PC-9 (cell line): ENCODE measurements at regions of chr5 and their contacts with region 1.

Region 1: DNA sequence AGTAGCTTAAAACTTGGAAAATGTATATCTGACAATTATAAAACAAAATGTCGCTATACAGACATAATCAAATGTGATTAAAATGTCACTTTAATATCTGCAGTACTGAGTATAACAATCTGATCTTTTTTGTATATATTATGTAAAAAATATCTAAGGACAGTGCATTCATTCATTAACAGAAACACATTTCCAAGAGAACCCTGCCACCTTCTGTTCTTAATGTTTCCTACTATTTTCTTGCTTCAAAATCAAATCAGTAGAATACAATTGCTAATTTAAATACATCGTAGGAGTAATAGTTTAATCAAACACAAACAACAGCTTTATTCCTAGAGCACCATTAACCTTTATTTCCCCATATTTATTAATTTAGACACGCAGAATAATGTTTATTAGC is 142.6 kb upstream of the ST8SIA4 start:
- DNase-seq: no peak
- H3K4me3 ChIP-seq: no peak overlapping the region
- H3K27ac ChIP-seq: no peak overlapping the region
- H3K4me1 ChIP-seq: no peaks in the 10 kb centered on the region
- H3K27me3 ChIP-seq: no peaks in the 10 kb centered on the region
- CTCF ChIP-seq: peak; percentile 49

Region 2: GRCh38 chr5:100479079-100479688 is 566.5 kb before region 1 on chr5:
- CTCF ChIA-PET with region 1: no interaction called
- POLR2A ChIA-PET with region 1: no interaction called
- intact Hi-C with region 1: loop called (anchors 5 kb)
- DNase-seq: no peak
- H3K4me3 ChIP-seq: no peak overlapping the region
- H3K27ac ChIP-seq: no peak overlapping the region
- H3K4me1 ChIP-seq: no peaks in the 10 kb centered on the region
- H3K27me3 ChIP-seq: no peaks in the 10 kb centered on the region
- CTCF ChIP-seq: peak; percentile 64

Region 3: DNA sequence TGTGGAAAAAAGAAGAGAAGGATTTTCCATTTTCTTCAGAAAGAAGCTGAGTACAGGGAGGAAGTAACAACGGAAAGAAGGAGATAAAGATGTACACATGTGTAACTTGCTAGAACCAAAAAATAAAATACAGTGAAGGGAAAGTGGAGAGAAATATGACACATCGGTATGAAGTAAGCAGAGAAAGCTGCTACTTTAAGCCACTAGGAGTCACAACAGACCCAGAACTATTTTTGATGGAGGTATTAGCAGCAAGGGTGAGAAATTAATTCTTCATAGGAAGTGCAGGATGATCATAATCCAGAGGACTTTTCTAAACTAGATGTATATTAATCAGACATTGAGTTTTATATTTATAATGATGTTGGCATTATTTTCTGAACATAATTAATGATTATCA is 422.0 kb before region 1 on chr5:
- CTCF ChIA-PET with region 1: no interaction called
- POLR2A ChIA-PET with region 1: no interaction called
- intact Hi-C with region 1: loop called (anchors 10 kb)
- DNase-seq: no peak
- H3K4me3 ChIP-seq: no peak overlapping the region
- H3K27ac ChIP-seq: no peak overlapping the region
- H3K4me1 ChIP-seq: no peaks in the 10 kb centered on the region
- H3K27me3 ChIP-seq: no peaks in the 10 kb centered on the region
- CTCF ChIP-seq: peak; percentile 51

Region 4: DNA sequence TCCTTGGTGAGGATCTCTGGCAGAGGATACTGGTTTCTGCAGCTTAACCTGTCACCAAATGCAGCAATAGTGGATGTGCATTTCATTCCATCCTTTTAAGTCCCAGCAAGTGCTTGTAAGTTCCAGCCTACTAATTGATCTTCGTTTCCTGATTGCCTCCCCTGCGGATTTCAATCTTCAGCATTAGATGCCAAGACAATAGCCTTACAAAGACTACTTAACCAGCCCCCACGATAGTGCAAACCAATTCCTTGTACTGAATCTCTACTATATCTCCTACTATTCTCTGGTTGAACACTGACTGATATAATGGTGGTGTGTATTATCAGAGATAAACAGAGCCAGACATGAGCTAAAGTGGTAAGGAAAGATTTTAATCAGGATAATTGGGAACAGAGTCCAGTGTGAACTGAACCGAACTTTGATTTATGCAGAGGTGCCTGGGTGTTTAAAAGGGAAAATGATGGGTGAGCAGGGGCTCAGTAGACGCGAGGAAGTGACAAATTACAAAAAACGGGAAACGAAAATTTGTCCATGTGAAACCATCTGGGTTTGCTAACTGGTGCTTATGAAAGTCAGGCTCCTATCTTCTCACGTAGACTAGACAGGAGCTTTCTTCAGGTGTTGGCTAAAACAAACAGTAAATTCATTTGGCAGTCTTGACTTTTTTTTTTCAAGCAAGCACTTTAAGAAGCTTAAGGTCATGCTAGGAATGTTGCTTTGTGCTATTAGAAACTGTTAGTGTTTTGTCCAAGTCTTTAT is 35.8 kb before region 1 on chr5:
- CTCF ChIA-PET with region 1: no interaction called
- POLR2A ChIA-PET with region 1: interaction called, 11 read pairs
- intact Hi-C with region 1: no loop called
- DNase-seq: no peak
- H3K4me3 ChIP-seq: no peak overlapping the region
- H3K27ac ChIP-seq: no peak overlapping the region
- H3K4me1 ChIP-seq: no peaks in the 10 kb centered on the region
- H3K27me3 ChIP-seq: no peaks in the 10 kb centered on the region
- CTCF ChIP-seq: no peak

Region 5: GRCh38 chr5:101062902-101063301 is 17.2 kb after region 1 on chr5:
- CTCF ChIA-PET with region 1: no interaction called
- POLR2A ChIA-PET with region 1: no interaction called
- intact Hi-C with region 1: no loop called
- DNase-seq: no peak
- H3K4me3 ChIP-seq: no peak overlapping the region
- H3K27ac ChIP-seq: no peak overlapping the region
- H3K4me1 ChIP-seq: no peaks in the 10 kb centered on the region
- H3K27me3 ChIP-seq: no peaks in the 10 kb centered on the region
- CTCF ChIP-seq: no peak